Gastrocnemius medialis (tissue), 4 donors: ENCODE measurements at regions of chr1 and their contacts with region 1.

Region 1: DNA sequence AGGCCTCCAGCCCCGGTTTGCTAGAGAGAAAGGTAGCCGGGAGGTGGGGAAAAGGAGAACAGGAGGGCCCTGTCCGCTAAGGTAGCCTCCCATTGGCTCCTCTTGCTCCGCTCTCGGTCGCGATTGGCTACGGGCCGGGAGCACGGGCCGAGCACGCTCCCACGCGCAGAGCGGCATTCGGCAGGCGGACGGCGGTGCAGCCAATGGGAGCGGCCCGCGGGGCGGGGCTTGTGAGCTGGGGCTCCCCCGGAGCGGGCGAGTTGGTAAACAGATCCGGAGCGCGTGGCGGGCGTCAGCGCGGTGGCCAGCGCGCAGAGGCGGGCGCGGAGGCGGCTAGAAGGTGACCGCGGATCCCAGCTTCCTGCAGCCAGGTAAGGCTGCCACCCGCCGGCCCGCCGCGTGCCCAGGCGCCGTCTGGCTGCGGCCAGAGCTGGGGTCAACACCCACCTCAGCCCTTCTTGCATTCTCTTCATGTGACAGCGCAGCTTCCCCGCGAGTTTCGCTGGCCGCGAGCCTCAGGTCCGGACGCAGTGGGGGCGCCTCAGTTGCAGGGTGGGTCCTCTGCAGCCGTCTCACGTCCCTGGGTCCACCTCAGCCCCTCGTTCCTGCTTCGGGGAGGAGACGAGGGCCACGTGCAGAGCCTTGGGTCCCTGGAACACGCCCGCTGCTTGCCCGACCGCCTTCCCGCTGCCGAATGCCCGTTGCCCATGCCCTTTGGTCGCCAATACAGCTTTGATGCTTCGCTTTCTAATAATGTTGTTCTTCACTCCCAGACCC is at the start of gene COQ8A:
- DNase-seq: peak; percentile 99 to 100
- ATAC-seq: peak; percentile 73 to 74
- H3K4me3 ChIP-seq: peak within 1 kb of the TSS; percentile 84 to 95 (median 88)
- H3K27ac ChIP-seq: peak within 1 kb of the TSS; percentile 98 to 99 (median 99)
- H3K4me1 ChIP-seq: peaks cover 26 to 47% of the 10 kb centered on the region in 2 donors
- H3K27me3 ChIP-seq: no peaks in the 10 kb centered on the region
- CTCF ChIP-seq: peak in 1 of 5 experiments; percentile 0
- POLR2A ChIP-seq: peak; percentile 97 to 98
- total RNA-seq, gene COQ8A: 950 to 2,403 (median 1,384) TPM

Region 2: GRCh38 chr1:226702957-226703831 is 237.0 kb before region 1 on chr1:
- in situ Hi-C with region 1: no loop called
- intact Hi-C with region 1: loop called (anchors 5 kb)
- DNase-seq: peak; percentile 57 to 65
- ATAC-seq: peak; percentile 61 to 63
- H3K4me3 ChIP-seq: peak overlapping the region; percentile 79 to 90 (median 84)
- H3K27ac ChIP-seq: peak overlapping the region; percentile 96 to 99 (median 98)
- H3K4me1 ChIP-seq: peaks cover 33 to 51% of the 10 kb centered on the region in 2 donors
- H3K27me3 ChIP-seq: no peaks in the 10 kb centered on the region
- CTCF ChIP-seq: peak in 2 of 5 experiments; percentile 21 to 32
- POLR2A ChIP-seq: peak; percentile 92 to 95

Region 3: DNA sequence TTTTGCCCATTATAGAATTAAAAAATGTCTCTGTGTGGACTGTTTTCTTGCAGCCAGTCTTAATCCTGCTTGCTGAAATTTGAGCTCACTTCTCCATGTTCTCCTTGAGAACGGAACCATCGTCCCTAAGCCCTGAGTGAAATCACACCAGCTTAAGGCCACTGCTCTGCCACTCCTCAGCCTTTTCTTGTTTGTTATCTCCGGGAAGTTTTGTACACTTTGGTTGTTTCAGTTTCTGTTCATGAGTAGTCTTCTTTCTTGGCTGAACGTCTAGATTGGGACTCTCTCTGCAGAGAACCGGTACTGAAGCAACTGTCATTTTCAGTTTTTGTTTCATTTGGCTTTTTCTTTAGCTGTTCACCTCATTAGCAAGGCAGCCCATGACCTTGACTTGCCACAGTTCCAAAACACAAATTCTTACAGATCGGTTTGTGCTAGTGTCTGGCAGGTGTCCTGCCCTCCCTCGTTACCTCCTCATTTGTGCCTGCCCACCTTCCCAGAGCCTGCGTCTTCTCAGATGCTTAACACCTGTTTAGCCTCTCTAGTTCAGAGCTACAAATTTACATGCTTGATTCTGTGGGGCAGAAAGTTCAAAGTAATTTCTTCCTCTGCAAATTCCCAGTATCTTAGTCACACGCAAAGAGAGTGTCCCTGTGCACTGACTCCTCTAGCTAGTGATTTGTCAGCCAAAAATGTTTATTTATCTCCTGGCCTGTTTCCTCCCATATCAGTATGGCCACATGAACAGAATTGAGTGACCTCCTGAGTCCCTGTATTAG is 57.4 kb before region 1 on chr1:
- in situ Hi-C with region 1: no loop called
- intact Hi-C with region 1: no loop called
- DNase-seq: no peak
- ATAC-seq: peak in 1 of 2 donors; percentile 47
- H3K4me3 ChIP-seq: peak overlapping the region in 3 of 4 donors; percentile 7 to 32 (median 17)
- H3K27ac ChIP-seq: peak overlapping the region; percentile 5 to 50 (median 20)
- H3K4me1 ChIP-seq: peaks cover 0 to 12% of the 10 kb centered on the region in 2 donors
- H3K27me3 ChIP-seq: no peaks in the 10 kb centered on the region
- CTCF ChIP-seq: no peak
- POLR2A ChIP-seq: no peak

Region 4: GRCh38 chr1:226967665-226968064 is 27.4 kb after region 1 on chr1:
- in situ Hi-C with region 1: no loop called
- intact Hi-C with region 1: loop called (anchors 1 kb)
- DNase-seq: peak; percentile 94 to 98
- ATAC-seq: peak; percentile 88 to 89
- H3K4me3 ChIP-seq: peak overlapping the region in 1 of 4 donors; percentile 31
- H3K27ac ChIP-seq: peak overlapping the region; percentile 99
- H3K4me1 ChIP-seq: peaks cover 82 to 92% of the 10 kb centered on the region in 2 donors
- H3K27me3 ChIP-seq: no peaks in the 10 kb centered on the region
- CTCF ChIP-seq: no peak
- POLR2A ChIP-seq: peak in 1 of 2 donors; percentile 48

Region 5: GRCh38 chr1:227219715-227220292 is 279.6 kb after region 1 on chr1:
- in situ Hi-C with region 1: no loop called
- intact Hi-C with region 1: no loop called
- DNase-seq: no peak
- ATAC-seq: no peak
- H3K4me3 ChIP-seq: no peak overlapping the region
- H3K27ac ChIP-seq: no peak overlapping the region
- H3K4me1 ChIP-seq: peaks cover 0 to 11% of the 10 kb centered on the region in 2 donors
- H3K27me3 ChIP-seq: no peaks in the 10 kb centered on the region
- CTCF ChIP-seq: no peak
- POLR2A ChIP-seq: no peak

Region 6: GRCh38 chr1:228082135-228082891 is 1142.1 kb after region 1 on chr1 and contains the start of gene ARF1:
- in situ Hi-C with region 1: no loop called
- intact Hi-C with region 1: loop called (anchors 10 kb)
- DNase-seq: peak; percentile 83 to 86
- ATAC-seq: peak; percentile 75 to 76
- H3K4me3 ChIP-seq: peak within 1 kb of the TSS; percentile 70 to 94 (median 93)
- H3K27ac ChIP-seq: peak within 1 kb of the TSS; percentile 89 to 96 (median 92)
- H3K4me1 ChIP-seq: peaks cover 41 to 47% of the 10 kb centered on the region in 2 donors
- H3K27me3 ChIP-seq: no peaks in the 10 kb centered on the region
- CTCF ChIP-seq: peak in 2 of 5 experiments; percentile 14 to 42
- POLR2A ChIP-seq: peak; percentile 94 to 97
- total RNA-seq, gene ARF1: 234 to 422 (median 306) TPM